ENCODE measurements at regions of chr20 and their contacts with region 1.

Region 1: GRCh38 chr20:46651091-46651962 is at the start of gene SLC13A3:
- DNase-seq: no peak
- ATAC-seq: no peak
- H3K4me3 ChIP-seq: no peak within 1 kb of the TSS; the same call in 1 of the 2 replicates
- H3K27ac ChIP-seq: no peak within 1 kb of the TSS
- H3K4me1 ChIP-seq: peaks cover 3% of the 10 kb centered on the region; the same call in 1 of the 2 replicates
- H3K27me3 ChIP-seq: peaks cover 27% of the 10 kb centered on the region
- CTCF ChIP-seq: no peak
- POLR2A ChIP-seq: no peak
- RAD21 ChIP-seq: no peak
- total RNA-seq, gene SLC13A3: 2.5 and 2.8 TPM in 2 replicates

Region 2: DNA sequence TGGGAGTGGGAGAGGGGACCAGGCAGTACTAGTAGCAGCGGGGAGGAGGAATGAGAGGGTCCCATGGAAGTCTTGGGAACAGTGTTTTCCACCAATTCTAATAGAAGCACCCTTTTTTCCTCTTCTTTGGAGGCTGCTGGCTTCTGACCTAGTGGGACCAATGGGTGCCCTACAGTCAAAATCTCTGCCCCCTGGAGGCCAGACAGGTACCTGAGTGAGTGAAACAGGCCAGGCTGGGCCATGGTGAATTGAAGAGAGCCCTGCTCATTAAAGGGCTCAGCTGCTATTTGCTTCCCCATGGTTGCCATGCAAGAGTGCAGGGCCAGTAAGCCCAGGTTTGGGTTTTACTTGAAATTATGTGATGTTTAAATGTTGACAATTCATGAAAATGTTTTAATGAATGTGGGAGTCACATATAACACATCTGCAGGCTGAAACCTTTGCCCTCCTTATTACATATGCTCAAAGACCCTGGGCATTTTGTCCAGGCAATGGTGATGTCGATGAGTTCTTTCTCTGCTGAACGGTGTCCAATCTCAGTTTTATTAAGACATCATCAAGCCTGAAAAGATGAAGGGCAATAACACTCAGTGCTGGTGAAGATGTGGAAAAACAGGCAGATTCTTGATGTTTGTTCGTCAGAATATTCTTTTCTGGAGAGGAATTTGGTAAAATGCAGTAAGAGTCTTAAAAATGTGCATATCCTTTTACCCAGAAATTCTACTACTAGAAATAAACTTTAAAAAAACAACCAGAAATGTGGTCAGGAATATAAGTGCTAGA is 58.6 kb before region 1 on chr20:
- CTCF ChIA-PET with region 1: no interaction called
- POLR2A ChIA-PET with region 1: no interaction called
- dilution Hi-C with region 1: no loop called
- in situ Hi-C with region 1: no loop called
- intact Hi-C with region 1: loop called (anchors 10 kb)
- DNase-seq: no peak
- ATAC-seq: no peak
- H3K4me3 ChIP-seq: no peak overlapping the region
- H3K27ac ChIP-seq: no peak overlapping the region
- H3K4me1 ChIP-seq: no peaks in the 10 kb centered on the region
- H3K27me3 ChIP-seq: no peaks in the 10 kb centered on the region
- CTCF ChIP-seq: no peak
- POLR2A ChIP-seq: no peak
- RAD21 ChIP-seq: no peak

Region 3: GRCh38 chr20:46814366-46815242 is 163.3 kb after region 1 on chr20:
- CTCF ChIA-PET with region 1: no interaction called
- POLR2A ChIA-PET with region 1: no interaction called
- dilution Hi-C with region 1: no loop called
- in situ Hi-C with region 1: no loop called
- intact Hi-C with region 1: no loop called
- DNase-seq: peak; percentile 87
- ATAC-seq: peak; percentile 99
- H3K4me3 ChIP-seq: no peak overlapping the region
- H3K27ac ChIP-seq: no peak overlapping the region
- H3K4me1 ChIP-seq: peaks cover 8% of the 10 kb centered on the region
- H3K27me3 ChIP-seq: peaks cover 5% of the 10 kb centered on the region; the same call in 1 of the 2 replicates
- CTCF ChIP-seq: no peak
- POLR2A ChIP-seq: no peak
- RAD21 ChIP-seq: no peak; the same call in 1 of the 2 replicates

Region 4: DNA sequence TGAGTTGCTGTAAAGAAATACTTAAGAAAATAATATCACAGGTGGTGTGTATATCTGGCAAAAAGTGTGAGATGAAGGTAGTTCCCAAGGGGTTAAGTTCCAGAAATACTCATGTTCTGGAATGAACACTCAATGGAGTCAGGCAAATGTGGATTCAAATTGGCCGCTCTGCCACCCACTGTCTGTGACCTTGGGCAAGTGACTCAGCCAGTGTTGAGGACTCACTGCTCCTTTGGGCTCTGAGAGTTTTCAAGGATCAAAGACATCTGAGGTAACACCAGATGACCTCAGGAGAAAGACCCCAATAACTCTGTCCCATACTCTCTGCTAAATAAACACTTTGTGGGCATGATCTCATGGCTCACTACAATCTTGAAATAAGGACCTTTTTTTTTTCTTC is 184.1 kb after region 1 on chr20:
- CTCF ChIA-PET with region 1: no interaction called
- POLR2A ChIA-PET with region 1: no interaction called
- dilution Hi-C with region 1: no loop called
- in situ Hi-C with region 1: no loop called
- intact Hi-C with region 1: no loop called
- DNase-seq: peak; percentile 61
- ATAC-seq: peak; percentile 42; the same call in 1 of the 2 replicates
- H3K4me3 ChIP-seq: no peak overlapping the region
- H3K27ac ChIP-seq: no peak overlapping the region
- H3K4me1 ChIP-seq: peaks cover 10% of the 10 kb centered on the region
- H3K27me3 ChIP-seq: no peaks in the 10 kb centered on the region
- CTCF ChIP-seq: no peak
- POLR2A ChIP-seq: no peak
- RAD21 ChIP-seq: no peak

Measured in IMR-90 (cell line).